GM12878 (cell line): ENCODE measurements at regions of chr3 and their contacts with region 1.

Region 1: DNA sequence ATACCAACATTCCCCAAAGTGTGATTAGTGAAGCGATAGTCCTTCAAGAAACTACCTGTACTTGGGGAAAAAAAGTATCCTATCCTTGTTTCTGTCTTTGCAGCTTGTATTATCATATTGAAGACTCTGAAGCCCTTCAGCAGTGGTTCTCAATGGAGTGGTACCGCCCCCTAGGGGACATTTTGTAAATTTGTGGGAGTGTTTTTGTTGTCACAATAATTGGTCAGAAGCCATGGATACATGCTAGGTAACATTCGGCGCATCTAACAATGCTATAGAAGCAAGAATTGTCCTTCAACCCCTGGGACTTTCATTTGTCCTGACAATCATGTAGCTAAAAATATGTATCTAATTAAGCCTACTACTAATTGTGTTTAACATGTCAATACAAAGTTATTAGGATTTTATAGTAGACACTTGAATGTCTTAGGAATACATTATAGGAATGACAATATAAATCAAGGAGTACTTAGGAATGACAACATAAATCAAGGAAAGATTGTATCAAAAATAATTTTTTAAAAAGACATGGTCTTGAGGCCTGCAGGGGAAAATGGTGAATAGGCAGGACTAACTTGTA is 53.7 kb downstream of the NMD3 start:
- DNase-seq: no peak
- ATAC-seq: peak; percentile 92
- H3K4me3 ChIP-seq: no peak overlapping the region
- H3K27ac ChIP-seq: no peak overlapping the region
- H3K4me1 ChIP-seq: no peaks in the 10 kb centered on the region
- H3K27me3 ChIP-seq: no peaks in the 10 kb centered on the region
- CTCF ChIP-seq: peak; percentile 58 to 70 (median 63)
- EP300 ChIP-seq: no peak
- POLR2A ChIP-seq: no peak
- RAD21 ChIP-seq: peak; percentile 72

Region 2: GRCh38 chr3:160956806-160957205 is 318.0 kb before region 1 on chr3:
- CTCF ChIA-PET with region 1: interaction called, 13 read pairs
- POLR2A ChIA-PET with region 1: no interaction called
- RAD21 ChIA-PET with region 1: interaction called, 8 read pairs
- SMC1A ChIA-PET with region 1: interaction called, 7 read pairs
- in situ Hi-C with region 1: loop called (anchors 10 kb)
- intact Hi-C with region 1: loop called (anchors 1 kb)
- DNase-seq: no peak
- ATAC-seq: peak; percentile 79
- H3K4me3 ChIP-seq: no peak overlapping the region
- H3K27ac ChIP-seq: no peak overlapping the region
- H3K4me1 ChIP-seq: no peaks in the 10 kb centered on the region
- H3K27me3 ChIP-seq: no peaks in the 10 kb centered on the region
- CTCF ChIP-seq: peak; percentile 44 to 55 (median 47); a peak in 5 of 6 replicates
- EP300 ChIP-seq: no peak
- POLR2A ChIP-seq: no peak
- RAD21 ChIP-seq: peak; percentile 62

Region 3: DNA sequence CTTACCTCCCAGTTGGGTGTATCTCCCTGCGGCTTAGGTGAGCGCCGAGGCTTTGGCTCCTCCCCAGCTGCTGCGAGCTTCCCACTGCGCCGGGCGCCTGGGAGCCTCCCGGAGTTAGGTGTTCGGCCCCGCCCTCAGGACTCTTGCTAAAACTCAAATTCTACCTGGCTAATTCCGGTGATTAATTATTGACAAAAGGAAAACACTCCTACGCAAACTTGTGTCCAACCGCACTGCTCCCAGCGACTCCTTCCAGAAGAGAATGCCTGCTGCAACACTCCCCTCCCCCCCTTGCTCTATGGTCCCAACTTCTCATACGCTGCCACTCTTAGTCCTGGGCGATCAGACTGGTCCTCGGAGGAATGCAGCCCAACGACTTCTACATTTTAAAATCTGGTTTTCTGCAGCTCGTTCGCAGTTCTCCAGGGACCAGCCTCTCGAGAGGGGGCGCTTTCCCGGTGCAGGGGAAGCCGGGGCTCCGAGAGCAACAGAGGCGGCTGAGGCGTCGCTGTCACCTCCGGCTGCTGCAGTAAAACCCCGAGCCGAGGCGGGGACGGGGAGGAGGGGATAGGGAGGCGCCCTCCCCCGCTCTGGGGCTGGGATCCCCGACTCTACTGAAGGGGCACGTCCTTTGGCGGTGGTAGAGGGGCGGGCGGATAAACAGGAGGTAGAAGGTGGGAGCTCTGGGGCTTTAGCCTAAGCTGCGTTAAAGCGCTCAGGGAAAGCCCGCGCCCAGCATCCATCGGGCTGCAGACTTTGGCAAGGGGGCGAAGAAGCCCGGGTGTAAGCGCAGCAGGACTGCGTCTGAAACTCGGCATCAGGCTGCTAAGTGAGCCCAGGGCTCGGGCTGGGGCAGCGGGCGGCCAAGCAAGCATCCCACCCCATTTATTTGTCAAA is 96.9 kb after region 1 on chr3 and contains the start of gene SPTSSB:
- CTCF ChIA-PET with region 1: interaction called, 13 read pairs
- POLR2A ChIA-PET with region 1: no interaction called
- RAD21 ChIA-PET with region 1: no interaction called
- SMC1A ChIA-PET with region 1: interaction called, 4 read pairs
- in situ Hi-C with region 1: no loop called
- intact Hi-C with region 1: no loop called
- DNase-seq: no peak
- ATAC-seq: peak; percentile 74
- H3K4me3 ChIP-seq: no peak within 1 kb of the TSS
- H3K27ac ChIP-seq: no peak within 1 kb of the TSS
- H3K4me1 ChIP-seq: no peaks in the 10 kb centered on the region
- H3K27me3 ChIP-seq: peaks cover 6 to 18% of the 10 kb centered on the region in 2 experiments
- CTCF ChIP-seq: 0 out of 6 replicates have a peak, but pooled peaks of 1 of the 3 experiments have one; percentile 6
- EP300 ChIP-seq: no peak
- POLR2A ChIP-seq: no peak
- RAD21 ChIP-seq: no peak
- polyA plus RNA-seq, gene SPTSSB: 0.60 to 1.3 TPM

Region 4: DNA sequence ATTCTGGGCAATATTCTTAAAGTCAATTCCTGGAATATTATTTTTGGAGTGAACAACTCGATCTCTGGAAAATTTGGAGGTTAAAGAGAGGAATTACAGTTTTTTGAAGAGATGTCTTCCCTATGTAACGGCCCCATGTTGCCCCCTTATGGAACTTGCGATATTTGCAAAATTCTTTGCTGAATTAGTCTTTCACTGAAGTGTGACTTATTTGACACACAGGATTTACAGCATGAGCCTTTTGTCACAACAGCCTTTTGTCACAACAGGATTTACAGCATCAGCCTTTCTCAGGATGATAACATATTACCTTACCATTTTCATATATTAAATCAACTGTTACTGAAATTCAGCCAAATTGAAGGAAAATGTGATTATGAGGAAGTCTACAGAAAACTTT is 134.3 kb after region 1 on chr3:
- CTCF ChIA-PET with region 1: interaction called, 100 read pairs
- POLR2A ChIA-PET with region 1: no interaction called
- RAD21 ChIA-PET with region 1: interaction called, 36 read pairs
- SMC1A ChIA-PET with region 1: interaction called, 78 read pairs
- in situ Hi-C with region 1: loop called (anchors 5 kb)
- intact Hi-C with region 1: loop called (anchors 1 kb)
- DNase-seq: no peak
- ATAC-seq: peak; percentile 70
- H3K4me3 ChIP-seq: no peak overlapping the region
- H3K27ac ChIP-seq: no peak overlapping the region
- H3K4me1 ChIP-seq: peaks cover 4% of the 10 kb centered on the region; the same call in 1 of the 2 replicates
- H3K27me3 ChIP-seq: no peaks in the 10 kb centered on the region
- CTCF ChIP-seq: peak; percentile 41 to 59 (median 51); a peak in 5 of 6 replicates
- EP300 ChIP-seq: no peak
- POLR2A ChIP-seq: no peak
- RAD21 ChIP-seq: peak; percentile 60